Colonic mucosa (tissue), 4 donors: ENCODE measurements at regions of chr11 and their contacts with region 1.

Region 1: DNA sequence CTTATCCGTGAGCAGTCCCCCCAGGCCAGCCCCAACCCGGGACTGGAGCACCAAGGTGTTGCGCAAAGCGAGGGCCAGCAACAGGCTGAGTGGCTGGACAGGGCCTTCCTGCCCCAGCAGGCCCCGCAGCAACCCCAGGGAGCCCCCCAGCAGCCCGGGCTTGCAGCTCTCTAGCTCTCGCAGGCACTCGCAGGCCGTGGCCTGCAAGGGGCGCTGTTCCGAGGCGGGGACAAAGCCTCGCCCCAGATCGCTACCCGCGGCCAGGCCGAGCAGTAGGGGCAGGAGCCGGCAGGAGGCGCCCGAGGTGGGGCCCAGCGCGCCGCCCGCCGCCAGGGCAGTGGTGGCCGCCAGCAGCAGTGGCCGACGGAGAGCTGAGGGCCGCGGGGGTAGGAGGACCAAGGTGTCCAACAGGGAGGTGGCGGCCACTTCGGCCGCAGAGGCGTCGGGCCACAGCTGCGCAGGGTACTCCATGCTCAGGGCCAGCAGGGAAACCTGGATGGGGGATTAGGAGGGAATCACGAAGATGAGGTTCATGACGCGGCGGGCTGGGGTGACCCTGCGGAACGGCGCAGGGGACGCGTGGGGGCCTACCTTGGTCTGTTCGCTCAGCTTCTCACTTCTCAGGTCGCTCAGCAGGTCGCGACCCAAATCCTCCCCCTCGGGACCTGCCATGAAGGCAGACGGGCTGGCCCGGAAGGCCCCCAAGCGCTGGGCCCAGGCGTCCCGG is 762 bp downstream of the AP5B1 start:
- DNase-seq: peak; percentile 84
- H3K4me3 ChIP-seq: peak overlapping the region; percentile 91
- H3K27ac ChIP-seq: peak overlapping the region; percentile 88
- H3K4me1 ChIP-seq: peaks cover 6% of the 10 kb centered on the region
- H3K27me3 ChIP-seq: no peaks in the 10 kb centered on the region
- CTCF ChIP-seq: peak; percentile 93

Region 2: GRCh38 chr11:65720237-65720934 is 59.6 kb before region 1 on chr11 and contains the start of gene RNASEH2C:
- intact Hi-C with region 1: loop called (anchors 10 kb)
- DNase-seq: peak; percentile 87
- H3K4me3 ChIP-seq: peak within 1 kb of the TSS; percentile 48
- H3K27ac ChIP-seq: peak within 1 kb of the TSS; percentile 81
- H3K4me1 ChIP-seq: peaks cover 13% of the 10 kb centered on the region
- H3K27me3 ChIP-seq: no peaks in the 10 kb centered on the region
- CTCF ChIP-seq: no peak
- total RNA-seq, gene RNASEH2C: 26.1 to 58.1 TPM

Region 3: GRCh38 chr11:65817835-65818742 is 38.1 kb after region 1 on chr11:
- intact Hi-C with region 1: loop called (anchors 1 kb)
- DNase-seq: peak; percentile 98
- H3K4me3 ChIP-seq: peak overlapping the region; percentile 52
- H3K27ac ChIP-seq: peak overlapping the region; percentile 85
- H3K4me1 ChIP-seq: peaks cover 12% of the 10 kb centered on the region
- H3K27me3 ChIP-seq: no peaks in the 10 kb centered on the region
- CTCF ChIP-seq: peak; percentile 100

Region 4: GRCh38 chr11:65833297-65834030 is 53.5 kb after region 1 on chr11 and contains the start of gene SNX32:
- intact Hi-C with region 1: no loop called
- DNase-seq: peak; percentile 97
- H3K4me3 ChIP-seq: peak within 1 kb of the TSS; percentile 50
- H3K27ac ChIP-seq: no peak within 1 kb of the TSS
- H3K4me1 ChIP-seq: peaks cover 4% of the 10 kb centered on the region
- H3K27me3 ChIP-seq: no peaks in the 10 kb centered on the region
- CTCF ChIP-seq: no peak
- total RNA-seq, gene SNX32: 1.6 to 1.9 TPM

Region 5: GRCh38 chr11:65919146-65920033 is 139.4 kb after region 1 on chr11 and contains the start of gene DRAP1:
- intact Hi-C with region 1: no loop called
- DNase-seq: peak; percentile 98
- H3K4me3 ChIP-seq: peak within 1 kb of the TSS; percentile 98
- H3K27ac ChIP-seq: peak within 1 kb of the TSS; percentile 87
- H3K4me1 ChIP-seq: peaks cover 26% of the 10 kb centered on the region
- H3K27me3 ChIP-seq: no peaks in the 10 kb centered on the region
- CTCF ChIP-seq: no peak
- total RNA-seq, gene DRAP1: 53.4 to 91.5 TPM